CD8-positive, alpha-beta T cell (primary cell): ENCODE measurements at regions of chr18 and their contacts with region 1.

Region 1: GRCh38 chr18:28469946-28470345 is 293.0 kb upstream of the CDH2 start:
- DNase-seq: peak in 2 of 9 experiments; percentile 1 to 6
- ATAC-seq: no peak
- H3K4me3 ChIP-seq: no peak overlapping the region
- H3K4me3 Mint-ChIP-seq: no peak overlapping the region
- H3K27ac ChIP-seq: no peak overlapping the region
- H3K27ac Mint-ChIP-seq: no peak overlapping the region
- H3K4me1 ChIP-seq: no peaks in the 10 kb centered on the region
- H3K4me1 Mint-ChIP-seq: no peaks in the 10 kb centered on the region
- H3K27me3 ChIP-seq: no peaks in the 10 kb centered on the region
- H3K27me3 Mint-ChIP-seq: no peaks in the 10 kb centered on the region
- CTCF ChIP-seq: no peak

Region 2: DNA sequence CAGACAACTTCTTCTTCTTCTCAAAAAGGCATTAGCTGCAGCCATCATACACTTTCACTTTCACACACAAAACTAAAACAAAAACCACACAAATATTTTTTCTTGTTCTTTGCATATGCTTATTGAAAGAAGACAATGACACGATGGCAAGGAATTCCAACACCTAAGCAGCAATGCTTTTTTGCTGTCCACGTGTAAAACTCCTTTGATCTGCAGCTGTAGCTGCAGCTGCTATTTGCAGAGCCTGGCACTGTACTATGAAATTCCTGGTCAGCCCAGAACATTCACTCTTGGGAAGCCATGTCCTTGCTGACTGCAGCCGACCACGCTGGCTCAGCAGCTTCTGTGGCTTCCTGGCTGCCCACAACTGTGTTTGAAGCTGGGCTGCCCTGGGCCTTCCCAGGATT is 609.2 kb before region 1 on chr18:
- CTCF ChIA-PET with region 1: no interaction called
- POLR2A ChIA-PET with region 1: no interaction called
- intact Hi-C with region 1: no loop called
- DNase-seq: no peak
- ATAC-seq: no peak
- H3K4me3 ChIP-seq: no peak overlapping the region
- H3K4me3 Mint-ChIP-seq: no peak overlapping the region
- H3K27ac ChIP-seq: no peak overlapping the region
- H3K27ac Mint-ChIP-seq: no peak overlapping the region
- H3K4me1 ChIP-seq: no peaks in the 10 kb centered on the region
- H3K4me1 Mint-ChIP-seq: no peaks in the 10 kb centered on the region
- H3K27me3 ChIP-seq: no peaks in the 10 kb centered on the region
- H3K27me3 Mint-ChIP-seq: no peaks in the 10 kb centered on the region
- CTCF ChIP-seq: no peak

Region 3: DNA sequence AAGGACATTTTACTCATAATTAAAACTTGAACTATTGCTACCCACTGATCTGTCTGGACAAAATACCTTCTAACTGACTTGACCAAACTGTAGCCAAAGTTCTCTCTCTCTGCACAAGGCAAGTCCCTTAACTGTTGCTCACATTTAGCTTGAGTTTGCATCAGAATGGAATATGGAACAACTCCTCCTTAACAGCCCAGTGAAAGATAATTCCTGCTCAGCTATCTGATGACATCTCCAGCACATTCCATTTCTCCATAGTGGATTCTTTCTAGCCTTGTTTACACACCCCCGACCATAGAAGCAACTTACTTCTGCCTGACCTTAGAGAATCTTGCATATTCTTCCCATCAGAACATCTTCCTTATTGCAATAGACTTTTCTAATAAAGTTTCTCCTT is 24.2 kb after region 1 on chr18:
- CTCF ChIA-PET with region 1: no interaction called
- POLR2A ChIA-PET with region 1: no interaction called
- intact Hi-C with region 1: loop called in 1 of 2 experiments (anchors 2 kb)
- DNase-seq: no peak
- ATAC-seq: no peak
- H3K4me3 ChIP-seq: no peak overlapping the region
- H3K4me3 Mint-ChIP-seq: no peak overlapping the region
- H3K27ac ChIP-seq: no peak overlapping the region
- H3K27ac Mint-ChIP-seq: no peak overlapping the region
- H3K4me1 ChIP-seq: no peaks in the 10 kb centered on the region
- H3K4me1 Mint-ChIP-seq: no peaks in the 10 kb centered on the region
- H3K27me3 ChIP-seq: no peaks in the 10 kb centered on the region
- H3K27me3 Mint-ChIP-seq: no peaks in the 10 kb centered on the region
- CTCF ChIP-seq: no peak

Region 4: DNA sequence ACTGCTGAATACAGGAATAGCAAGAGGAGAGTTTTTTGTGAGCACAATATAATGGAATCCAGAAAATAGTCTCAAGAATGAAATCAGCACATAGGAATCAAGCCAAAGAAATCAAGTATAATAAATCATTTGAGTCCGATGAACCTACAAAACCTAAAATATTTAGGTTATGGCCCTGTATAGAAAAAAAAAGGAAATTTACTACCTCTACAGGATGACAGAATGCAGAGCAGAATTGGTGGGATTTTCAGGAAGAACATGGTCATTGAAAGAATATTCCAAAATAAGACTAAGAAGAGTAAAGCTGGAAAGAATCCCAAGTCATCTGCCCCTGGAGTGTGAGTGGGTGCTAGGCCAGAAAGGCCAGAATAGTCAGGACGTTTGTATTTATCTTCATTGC is 748.1 kb after region 1 on chr18:
- CTCF ChIA-PET with region 1: no interaction called
- POLR2A ChIA-PET with region 1: no interaction called
- intact Hi-C with region 1: loop called in 1 of 2 experiments (anchors 10 kb)
- DNase-seq: no peak
- ATAC-seq: no peak
- H3K4me3 ChIP-seq: no peak overlapping the region
- H3K4me3 Mint-ChIP-seq: no peak overlapping the region
- H3K27ac ChIP-seq: no peak overlapping the region
- H3K27ac Mint-ChIP-seq: no peak overlapping the region
- H3K4me1 ChIP-seq: no peaks in the 10 kb centered on the region
- H3K4me1 Mint-ChIP-seq: no peaks in the 10 kb centered on the region
- H3K27me3 ChIP-seq: no peaks in the 10 kb centered on the region
- H3K27me3 Mint-ChIP-seq: no peaks in the 10 kb centered on the region
- CTCF ChIP-seq: no peak